CD4-positive, alpha-beta T cell (primary cell): ENCODE measurements at regions of chr22 and their contacts with region 1.

Region 1: GRCh38 chr22:41285820-41286638 is at the start of gene RANGAP1:
- DNase-seq: peak; percentile 95 to 100 (median 98)
- ATAC-seq: peak; percentile 85
- H3K4me3 ChIP-seq: peak within 1 kb of the TSS; percentile 100
- H3K4me3 Mint-ChIP-seq: peak within 1 kb of the TSS; percentile 96
- H3K27ac ChIP-seq: peak within 1 kb of the TSS; percentile 95 to 100
- H3K27ac Mint-ChIP-seq: peak within 1 kb of the TSS; percentile 100
- H3K4me1 ChIP-seq: peaks cover 28% of the 10 kb centered on the region
- H3K4me1 Mint-ChIP-seq: peaks cover 46% of the 10 kb centered on the region
- H3K27me3 ChIP-seq: no peaks in the 10 kb centered on the region
- H3K27me3 Mint-ChIP-seq: no peaks in the 10 kb centered on the region
- CTCF ChIP-seq: no peak
- total RNA-seq, gene RANGAP1: 163 to 172 TPM

Region 2: GRCh38 chr22:40856513-40857308 is 429.3 kb before region 1 on chr22 and contains the starts of genes ST13 and XPNPEP3:
- CTCF ChIA-PET with region 1: no interaction called
- POLR2A ChIA-PET with region 1: interaction called, 12 read pairs
- intact Hi-C with region 1: loop called in 1 of 2 experiments (anchors 2 kb)
- DNase-seq: peak; percentile 94 to 99 (median 96)
- ATAC-seq: peak; percentile 86
- H3K4me3 ChIP-seq: peak within 1 kb of the TSS; percentile 96
- H3K4me3 Mint-ChIP-seq: peak within 1 kb of the TSS; percentile 100
- H3K27ac ChIP-seq: peak within 1 kb of the TSS; percentile 95 to 99
- H3K27ac Mint-ChIP-seq: peak within 1 kb of the TSS; percentile 100
- H3K4me1 ChIP-seq: peaks cover 22% of the 10 kb centered on the region
- H3K4me1 Mint-ChIP-seq: peaks cover 80% of the 10 kb centered on the region
- H3K27me3 ChIP-seq: no peaks in the 10 kb centered on the region
- H3K27me3 Mint-ChIP-seq: no peaks in the 10 kb centered on the region
- CTCF ChIP-seq: peak; percentile 38
- total RNA-seq, gene ST13: 164 to 170 TPM
- total RNA-seq, gene XPNPEP3: 16.3 to 17.9 TPM

Region 3: GRCh38 chr22:41085842-41086241 is 200.2 kb before region 1 on chr22:
- CTCF ChIA-PET with region 1: no interaction called
- POLR2A ChIA-PET with region 1: no interaction called
- intact Hi-C with region 1: no loop called
- DNase-seq: no peak
- ATAC-seq: no peak
- H3K4me3 ChIP-seq: no peak overlapping the region
- H3K4me3 Mint-ChIP-seq: no peak overlapping the region
- H3K27ac ChIP-seq: no peak overlapping the region
- H3K27ac Mint-ChIP-seq: no peak overlapping the region
- H3K4me1 ChIP-seq: peaks cover 6% of the 10 kb centered on the region
- H3K4me1 Mint-ChIP-seq: peaks cover 5% of the 10 kb centered on the region
- H3K27me3 ChIP-seq: no peaks in the 10 kb centered on the region
- H3K27me3 Mint-ChIP-seq: no peaks in the 10 kb centered on the region
- CTCF ChIP-seq: no peak

Region 4: DNA sequence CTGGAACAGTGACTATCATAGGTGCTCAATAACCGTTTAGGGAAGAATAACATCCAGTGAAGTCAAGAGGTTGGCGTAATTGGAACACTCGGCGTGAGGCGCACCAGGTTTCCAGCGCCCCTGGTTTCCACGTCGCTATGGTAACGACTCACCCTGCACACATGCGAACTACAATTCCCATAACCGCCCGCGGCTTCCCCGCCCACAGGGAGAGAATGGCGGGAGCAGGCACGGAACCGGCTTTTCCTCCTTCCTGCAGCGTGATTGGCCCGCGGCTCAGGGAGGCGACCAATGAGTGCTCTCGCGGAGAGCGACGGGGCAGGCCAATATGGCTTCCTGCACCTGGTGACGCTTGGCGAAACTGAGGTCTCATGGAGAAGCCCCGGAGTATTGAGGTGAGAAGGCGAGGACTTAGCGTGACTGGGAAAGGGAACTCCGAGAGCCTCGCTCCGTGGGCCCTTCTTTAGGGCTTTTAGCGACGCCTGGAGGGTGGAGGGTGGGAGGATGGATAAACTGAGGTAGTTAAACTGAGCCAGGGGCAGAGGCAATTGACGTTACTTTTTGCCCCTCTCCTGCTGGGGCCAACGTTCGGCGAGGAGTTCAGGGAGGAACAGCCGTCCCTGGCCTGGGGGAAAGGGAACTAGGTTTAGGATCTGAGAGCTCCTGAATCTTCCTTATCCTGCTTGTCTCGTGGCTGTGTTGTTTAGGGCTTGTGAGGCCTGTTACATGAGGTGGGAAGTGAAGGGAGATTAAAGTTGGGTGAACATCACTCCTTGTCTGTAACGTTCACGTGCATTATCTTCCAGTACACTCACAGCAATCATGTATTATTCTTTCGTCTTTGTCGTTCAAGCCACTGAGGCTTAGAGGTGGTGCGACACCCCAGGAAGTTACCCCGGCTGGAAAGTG is 80.8 kb before region 1 on chr22 and contains the start of gene L3MBTL2:
- CTCF ChIA-PET with region 1: no interaction called
- POLR2A ChIA-PET with region 1: interaction called, 3 read pairs
- intact Hi-C with region 1: loop called in 1 of 2 experiments (anchors 5 kb)
- DNase-seq: peak; percentile 95 to 99 (median 98)
- ATAC-seq: peak; percentile 100
- H3K4me3 ChIP-seq: peak within 1 kb of the TSS; percentile 96
- H3K4me3 Mint-ChIP-seq: peak within 1 kb of the TSS; percentile 97
- H3K27ac ChIP-seq: peak within 1 kb of the TSS; percentile 59 to 82
- H3K27ac Mint-ChIP-seq: peak within 1 kb of the TSS; percentile 87
- H3K4me1 ChIP-seq: peaks cover 23% of the 10 kb centered on the region
- H3K4me1 Mint-ChIP-seq: peaks cover 23% of the 10 kb centered on the region
- H3K27me3 ChIP-seq: peaks cover 0 to 6% of the 10 kb centered on the region in 2 experiments
- H3K27me3 Mint-ChIP-seq: no peaks in the 10 kb centered on the region
- CTCF ChIP-seq: no peak
- total RNA-seq, gene L3MBTL2: 16.4 to 17.5 TPM

Region 5: GRCh38 chr22:41217553-41218157 is 68.4 kb before region 1 on chr22:
- CTCF ChIA-PET with region 1: no interaction called
- POLR2A ChIA-PET with region 1: no interaction called
- intact Hi-C with region 1: no loop called
- DNase-seq: peak in 6 of 14 experiments; percentile 11 to 70 (median 46)
- ATAC-seq: peak; percentile 100
- H3K4me3 ChIP-seq: peak overlapping the region; percentile 17
- H3K4me3 Mint-ChIP-seq: peak overlapping the region; percentile 42
- H3K27ac ChIP-seq: no peak overlapping the region
- H3K27ac Mint-ChIP-seq: peak overlapping the region; percentile 42
- H3K4me1 ChIP-seq: peaks cover 22% of the 10 kb centered on the region
- H3K4me1 Mint-ChIP-seq: peaks cover 10% of the 10 kb centered on the region
- H3K27me3 ChIP-seq: no peaks in the 10 kb centered on the region
- H3K27me3 Mint-ChIP-seq: no peaks in the 10 kb centered on the region
- CTCF ChIP-seq: no peak

Region 6: DNA sequence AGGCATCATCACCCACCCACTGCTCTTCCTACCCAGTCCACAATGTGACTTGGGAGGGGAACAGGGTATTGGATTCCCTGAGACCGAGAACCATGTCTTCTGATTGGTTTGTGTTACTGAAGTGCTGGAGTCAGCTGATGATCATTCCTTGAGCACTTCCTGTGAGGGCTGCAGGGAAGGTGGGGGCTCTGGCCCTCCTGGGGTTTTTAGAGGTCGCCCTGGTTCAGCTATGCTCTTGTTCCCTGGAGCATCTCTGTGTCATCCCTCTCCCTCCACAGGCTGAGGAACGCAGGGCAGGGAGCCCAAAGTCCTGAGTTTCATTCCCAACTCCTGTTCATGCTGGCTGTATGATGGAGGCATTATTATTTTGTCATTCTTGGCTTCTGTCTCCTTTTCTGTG is 22.0 kb after region 1 on chr22:
- CTCF ChIA-PET with region 1: no interaction called
- POLR2A ChIA-PET with region 1: interaction called, 170 read pairs
- intact Hi-C with region 1: no loop called
- DNase-seq: no peak
- ATAC-seq: no peak
- H3K4me3 ChIP-seq: no peak overlapping the region
- H3K4me3 Mint-ChIP-seq: no peak overlapping the region
- H3K27ac ChIP-seq: no peak overlapping the region
- H3K27ac Mint-ChIP-seq: no peak overlapping the region
- H3K4me1 ChIP-seq: peaks cover 25% of the 10 kb centered on the region
- H3K4me1 Mint-ChIP-seq: peaks cover 43% of the 10 kb centered on the region
- H3K27me3 ChIP-seq: no peaks in the 10 kb centered on the region
- H3K27me3 Mint-ChIP-seq: no peaks in the 10 kb centered on the region
- CTCF ChIP-seq: no peak

Region 7: DNA sequence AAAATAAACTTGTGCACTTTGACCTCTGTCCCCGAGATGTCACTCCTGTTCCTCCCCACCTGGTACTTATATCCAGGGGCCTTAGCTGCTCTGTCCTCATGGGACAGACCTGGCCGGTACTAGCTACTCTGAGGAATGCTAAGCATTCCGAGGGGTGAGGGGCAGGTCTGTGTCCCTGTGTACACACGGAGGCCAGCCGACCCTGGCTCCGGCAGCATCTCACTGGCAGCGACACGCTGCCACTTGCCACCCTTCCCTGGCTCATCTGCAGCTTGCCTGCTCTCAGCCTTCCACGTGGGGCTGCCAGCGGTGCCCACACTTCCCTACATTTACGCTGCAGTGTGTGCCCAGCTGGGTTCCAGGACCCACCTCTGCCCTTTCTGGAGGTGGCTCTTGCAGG is 74.1 kb after region 1 on chr22:
- CTCF ChIA-PET with region 1: no interaction called
- POLR2A ChIA-PET with region 1: no interaction called
- intact Hi-C with region 1: no loop called
- DNase-seq: no peak
- ATAC-seq: no peak
- H3K4me3 ChIP-seq: no peak overlapping the region
- H3K4me3 Mint-ChIP-seq: no peak overlapping the region
- H3K27ac ChIP-seq: no peak overlapping the region
- H3K27ac Mint-ChIP-seq: no peak overlapping the region
- H3K4me1 ChIP-seq: no peaks in the 10 kb centered on the region
- H3K4me1 Mint-ChIP-seq: no peaks in the 10 kb centered on the region
- H3K27me3 ChIP-seq: no peaks in the 10 kb centered on the region
- H3K27me3 Mint-ChIP-seq: no peaks in the 10 kb centered on the region
- CTCF ChIP-seq: no peak

Region 8: GRCh38 chr22:41468381-41469217 is 182.6 kb after region 1 on chr22 and contains the starts of genes ACO2 and PHF5A:
- CTCF ChIA-PET with region 1: no interaction called
- POLR2A ChIA-PET with region 1: interaction called, 23 read pairs
- intact Hi-C with region 1: loop called (anchors 2 to 5 kb)
- DNase-seq: peak; percentile 95 to 99 (median 98)
- ATAC-seq: peak; percentile 92
- H3K4me3 ChIP-seq: peak within 1 kb of the TSS; percentile 94
- H3K4me3 Mint-ChIP-seq: peak within 1 kb of the TSS; percentile 89
- H3K27ac ChIP-seq: peak within 1 kb of the TSS; percentile 94 to 98
- H3K27ac Mint-ChIP-seq: peak within 1 kb of the TSS; percentile 97
- H3K4me1 ChIP-seq: peaks cover 27% of the 10 kb centered on the region
- H3K4me1 Mint-ChIP-seq: peaks cover 62% of the 10 kb centered on the region
- H3K27me3 ChIP-seq: no peaks in the 10 kb centered on the region
- H3K27me3 Mint-ChIP-seq: no peaks in the 10 kb centered on the region
- CTCF ChIP-seq: no peak
- total RNA-seq, gene ACO2: 69.5 to 71.9 TPM
- total RNA-seq, gene PHF5A: 41.3 to 44.2 TPM

Region 9: DNA sequence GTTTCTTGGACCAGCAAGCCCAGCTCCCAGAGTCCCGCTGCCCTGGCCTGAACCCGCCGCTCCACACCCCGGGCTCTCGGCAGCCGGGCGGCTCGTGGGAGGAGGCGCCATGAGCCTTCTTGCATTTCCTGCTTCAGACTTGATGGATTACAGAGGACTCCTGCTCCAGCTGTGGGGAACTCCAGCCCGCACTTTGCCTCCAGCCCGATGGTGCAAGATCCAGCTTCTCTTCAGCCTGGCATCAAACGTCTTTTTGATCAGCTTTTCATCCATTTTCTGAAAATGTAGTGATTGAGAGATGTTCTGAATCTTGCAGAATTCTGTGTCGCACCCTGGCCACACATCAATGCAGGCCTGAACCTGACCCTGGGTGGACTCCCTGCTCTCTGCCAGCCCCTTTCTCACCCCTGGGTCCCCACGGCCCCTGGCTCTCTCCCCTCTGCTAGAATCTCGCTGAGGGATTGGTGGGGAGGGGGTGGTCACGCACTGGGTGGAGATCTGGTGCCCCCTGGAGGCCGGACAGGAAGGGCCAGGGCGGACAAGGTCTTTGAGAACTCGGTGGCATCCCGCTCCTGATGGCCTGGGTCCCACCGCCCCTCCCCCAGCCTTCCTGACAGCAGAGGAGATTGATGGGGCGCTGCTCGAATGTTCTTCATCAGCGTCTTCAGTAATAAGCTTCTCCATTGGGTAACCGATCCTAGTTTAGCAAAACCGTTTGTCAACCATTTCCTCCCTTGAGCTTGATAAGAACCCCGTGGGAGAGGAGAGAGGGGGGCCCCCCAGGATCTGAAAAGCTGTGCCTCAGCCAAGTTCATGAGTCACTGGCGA is 1158.3 kb after region 1 on chr22:
- CTCF ChIA-PET with region 1: no interaction called
- POLR2A ChIA-PET with region 1: interaction called, 25 read pairs
- intact Hi-C with region 1: loop called in 1 of 2 experiments (anchors 5 kb)
- DNase-seq: peak; percentile 63 to 92 (median 80)
- ATAC-seq: peak; percentile 95
- H3K4me3 ChIP-seq: peak overlapping the region; percentile 62
- H3K4me3 Mint-ChIP-seq: peak overlapping the region; percentile 88
- H3K27ac ChIP-seq: peak overlapping the region; percentile 73 to 78
- H3K27ac Mint-ChIP-seq: peak overlapping the region; percentile 96
- H3K4me1 ChIP-seq: peaks cover 24% of the 10 kb centered on the region
- H3K4me1 Mint-ChIP-seq: peaks cover 28% of the 10 kb centered on the region
- H3K27me3 ChIP-seq: no peaks in the 10 kb centered on the region
- H3K27me3 Mint-ChIP-seq: no peaks in the 10 kb centered on the region
- CTCF ChIP-seq: peak; percentile 63